ENCODE measurements at regions of chr20 and their contacts with region 1.

Region 1: DNA sequence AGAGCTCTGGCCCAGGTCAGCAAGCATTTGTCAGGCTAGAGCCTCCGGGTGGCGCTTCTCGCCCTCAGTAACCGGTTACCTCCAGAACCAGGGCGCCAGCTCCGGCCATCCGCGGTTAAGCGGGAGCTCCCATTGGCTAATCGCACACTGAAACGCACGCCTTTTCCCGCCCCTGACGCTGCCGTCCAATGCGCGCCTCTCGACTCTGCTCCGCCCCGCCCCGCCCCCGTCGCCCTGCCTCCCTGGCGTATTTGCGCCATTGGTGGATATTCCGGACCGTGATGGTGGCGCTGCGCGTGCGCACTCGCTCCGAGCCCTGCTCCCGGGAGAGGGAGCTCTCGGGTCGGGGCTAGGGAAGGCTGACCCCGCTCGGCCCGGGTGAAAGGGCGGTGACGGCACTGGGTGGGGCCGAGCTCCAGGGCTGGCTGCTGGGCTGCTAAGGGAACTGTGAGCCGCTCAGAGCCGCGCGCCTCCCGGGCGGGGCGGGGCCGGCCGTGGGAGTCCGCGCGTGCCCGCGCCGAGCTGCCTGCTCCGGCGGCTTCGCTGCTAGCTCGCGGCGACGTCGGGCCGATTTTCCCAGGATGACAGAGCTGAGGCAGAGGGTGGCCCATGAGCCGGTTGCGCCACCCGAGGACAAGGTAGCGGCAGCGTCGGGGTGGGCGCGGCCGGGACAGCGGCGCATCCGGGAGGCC is at the start of gene CDS2:
- DNase-seq: peak; percentile 99
- ATAC-seq: peak; percentile 90
- H3K4me3 ChIP-seq: peak within 1 kb of the TSS; percentile 87
- H3K27ac ChIP-seq: peak within 1 kb of the TSS; percentile 44
- H3K4me1 ChIP-seq: peaks cover 15% of the 10 kb centered on the region
- H3K27me3 ChIP-seq: no peaks in the 10 kb centered on the region
- CTCF ChIP-seq: peak; percentile 72
- total RNA-seq, gene CDS2: 13.2 and 17.1 TPM in 2 replicates

Region 2: DNA sequence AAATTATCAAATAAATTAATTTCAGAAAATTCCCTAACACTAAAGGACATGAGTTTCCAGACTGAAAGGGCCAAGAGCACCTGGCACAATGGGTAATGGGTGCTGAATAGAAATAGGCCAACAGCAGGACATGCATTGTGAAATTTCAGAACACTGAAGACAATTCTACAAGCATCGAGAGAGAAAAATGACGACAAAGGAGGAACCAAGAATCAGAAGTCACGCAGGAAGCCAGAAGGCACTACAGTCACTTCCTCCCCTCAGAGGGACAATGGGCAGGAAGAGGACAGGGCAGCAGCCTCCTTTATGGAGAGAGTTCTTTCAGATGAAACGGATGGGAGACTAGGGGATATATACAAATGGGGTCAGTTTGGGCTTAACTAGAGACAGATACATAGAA is 36.5 kb before region 1 on chr20:
- CTCF ChIA-PET with region 1: no interaction called
- POLR2A ChIA-PET with region 1: no interaction called
- intact Hi-C with region 1: no loop called
- DNase-seq: no peak
- ATAC-seq: no peak
- H3K4me3 ChIP-seq: no peak overlapping the region
- H3K27ac ChIP-seq: no peak overlapping the region
- H3K4me1 ChIP-seq: no peaks in the 10 kb centered on the region
- H3K27me3 ChIP-seq: no peaks in the 10 kb centered on the region
- CTCF ChIP-seq: no peak

Region 3: GRCh38 chr20:5104479-5104878 is 22.2 kb before region 1 on chr20:
- CTCF ChIA-PET with region 1: no interaction called
- POLR2A ChIA-PET with region 1: no interaction called
- intact Hi-C with region 1: no loop called
- DNase-seq: no peak
- ATAC-seq: no peak
- H3K4me3 ChIP-seq: no peak overlapping the region
- H3K27ac ChIP-seq: no peak overlapping the region
- H3K4me1 ChIP-seq: no peaks in the 10 kb centered on the region
- H3K27me3 ChIP-seq: no peaks in the 10 kb centered on the region
- CTCF ChIP-seq: no peak

Region 4: GRCh38 chr20:5153612-5154542 is 27.2 kb after region 1 on chr20:
- CTCF ChIA-PET with region 1: interaction called, 23 read pairs
- POLR2A ChIA-PET with region 1: interaction called, 13 read pairs
- intact Hi-C with region 1: no loop called
- DNase-seq: peak; percentile 96
- ATAC-seq: peak; percentile 90
- H3K4me3 ChIP-seq: peak overlapping the region; percentile 25; the same call in 1 of the 2 replicates
- H3K27ac ChIP-seq: peak overlapping the region; percentile 93
- H3K4me1 ChIP-seq: peaks cover 56% of the 10 kb centered on the region
- H3K27me3 ChIP-seq: no peaks in the 10 kb centered on the region
- CTCF ChIP-seq: no peak

Region 5: DNA sequence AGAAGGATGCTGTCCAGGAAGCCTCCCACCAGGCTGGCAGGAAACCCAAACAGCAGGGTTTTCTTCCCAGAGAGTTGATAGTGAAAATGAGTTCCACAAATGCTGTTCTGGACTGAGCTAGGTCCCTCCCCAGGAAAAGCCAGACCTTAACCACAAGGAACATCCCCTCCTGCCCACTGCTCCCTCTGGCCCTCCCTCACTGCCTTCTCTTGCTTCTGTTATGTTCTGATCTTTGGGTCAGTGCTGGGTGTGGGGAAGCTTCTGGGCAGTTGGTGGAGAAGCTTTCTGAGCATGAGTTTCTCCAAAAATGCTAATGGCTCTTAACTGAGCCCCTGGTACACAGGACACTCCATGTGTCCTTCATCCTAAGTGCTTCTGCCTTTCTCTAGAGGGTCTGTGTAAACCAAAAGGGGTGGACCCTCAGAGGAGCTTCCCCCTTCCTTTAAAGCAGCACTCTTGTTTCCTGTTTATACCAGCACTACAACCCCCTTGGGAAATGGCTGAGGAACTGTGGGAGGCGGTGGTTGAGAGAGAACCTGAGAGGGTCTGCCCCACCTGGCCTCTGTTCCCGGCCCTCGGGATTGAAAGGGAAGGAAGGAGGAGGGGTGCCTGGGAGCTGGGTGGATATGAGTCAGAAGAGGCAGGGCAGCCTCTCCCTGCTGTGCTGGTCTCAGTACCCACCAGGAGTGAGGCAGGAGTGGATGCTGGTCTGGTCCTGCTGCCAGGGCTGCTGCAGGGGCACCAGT is 42.2 kb after region 1 on chr20:
- CTCF ChIA-PET with region 1: interaction called, 17 read pairs
- POLR2A ChIA-PET with region 1: interaction called, 5 read pairs
- intact Hi-C with region 1: no loop called
- DNase-seq: peak; percentile 66
- ATAC-seq: peak; percentile 98
- H3K4me3 ChIP-seq: no peak overlapping the region
- H3K27ac ChIP-seq: 0 out of 2 replicates have a peak overlapping the region, but pooled peaks have one; percentile 19
- H3K4me1 ChIP-seq: peaks cover 14% of the 10 kb centered on the region
- H3K27me3 ChIP-seq: no peaks in the 10 kb centered on the region
- CTCF ChIP-seq: no peak

Region 6: GRCh38 chr20:5191829-5192569 is 65.3 kb after region 1 on chr20:
- CTCF ChIA-PET with region 1: interaction called, 161 read pairs
- POLR2A ChIA-PET with region 1: interaction called, 16 read pairs
- intact Hi-C with region 1: loop called (anchors 1 kb)
- DNase-seq: peak; percentile 82
- ATAC-seq: peak; percentile 87
- H3K4me3 ChIP-seq: no peak overlapping the region
- H3K27ac ChIP-seq: no peak overlapping the region
- H3K4me1 ChIP-seq: no peaks in the 10 kb centered on the region
- H3K27me3 ChIP-seq: no peaks in the 10 kb centered on the region
- CTCF ChIP-seq: peak; percentile 87

Region 7: DNA sequence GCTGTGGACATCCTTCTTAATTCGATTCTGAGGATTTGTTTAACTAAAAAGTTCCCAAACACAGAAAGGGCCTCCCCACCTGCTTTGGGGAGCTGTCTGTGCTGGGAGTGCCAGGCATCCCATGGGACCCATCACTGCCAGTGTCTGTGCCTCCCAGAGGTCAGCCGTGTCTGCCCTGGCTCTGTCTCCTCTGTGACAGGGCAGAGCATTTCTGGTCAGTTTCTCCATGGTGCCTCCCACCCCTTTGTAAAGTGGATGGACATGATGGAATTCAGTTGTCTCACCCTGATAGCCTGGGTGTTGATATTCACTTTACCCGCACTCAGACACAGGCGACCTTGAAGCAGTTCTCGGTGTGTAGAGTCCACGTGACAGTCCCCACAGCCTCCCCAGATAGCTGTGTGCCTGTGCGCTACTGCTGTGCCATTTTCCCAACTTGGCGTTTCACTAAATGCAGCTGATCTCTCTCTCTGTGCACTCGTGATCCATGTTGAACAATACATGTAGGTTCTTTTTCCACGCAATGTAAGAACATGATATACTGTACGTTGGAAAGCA is 70.7 kb after region 1 on chr20:
- CTCF ChIA-PET with region 1: interaction called, 161 read pairs
- POLR2A ChIA-PET with region 1: interaction called, 16 read pairs
- intact Hi-C with region 1: loop called (anchors 1 kb)
- DNase-seq: no peak
- ATAC-seq: no peak
- H3K4me3 ChIP-seq: no peak overlapping the region
- H3K27ac ChIP-seq: no peak overlapping the region
- H3K4me1 ChIP-seq: no peaks in the 10 kb centered on the region
- H3K27me3 ChIP-seq: no peaks in the 10 kb centered on the region
- CTCF ChIP-seq: no peak

Region 8: DNA sequence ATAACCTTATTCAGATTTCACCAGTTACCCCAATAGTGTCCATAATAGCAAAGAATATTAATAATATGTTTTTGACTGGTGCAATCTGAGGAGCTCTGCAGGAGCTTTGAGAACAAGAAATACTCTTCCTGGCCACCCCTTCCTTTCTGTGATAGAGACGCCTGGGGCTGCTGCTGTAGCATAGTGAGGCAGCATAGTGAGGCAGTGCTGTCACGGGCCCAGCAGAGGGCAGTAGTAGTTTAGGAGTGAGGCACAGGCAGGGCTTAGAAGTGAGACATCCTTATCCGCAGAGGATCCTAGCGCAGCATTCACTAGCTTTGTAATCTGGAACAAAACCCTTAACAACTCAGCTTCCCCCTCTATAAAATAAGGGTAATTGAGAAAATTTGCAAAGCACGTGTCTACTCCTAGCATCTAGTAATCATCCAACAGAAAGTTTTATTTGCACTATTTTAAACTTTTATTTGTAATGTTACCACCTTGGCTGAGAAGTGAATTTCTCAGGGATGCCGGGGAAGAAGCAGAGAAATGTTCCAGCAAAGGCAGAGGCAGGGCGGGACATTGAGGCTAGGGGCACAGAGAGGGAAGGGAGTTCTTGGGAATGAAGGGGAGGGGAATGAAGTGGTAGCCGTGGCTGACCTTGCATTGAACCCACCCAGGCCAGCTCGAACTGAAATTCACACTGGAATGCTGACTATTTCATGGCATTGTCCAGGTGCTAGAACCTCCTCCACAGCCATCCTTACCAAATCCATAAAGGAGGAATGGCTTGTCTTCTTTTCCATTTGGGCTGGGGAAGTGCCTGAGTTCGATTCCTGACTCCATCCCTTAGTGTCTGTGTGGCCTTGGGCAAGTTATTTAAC is 78.9 kb after region 1 on chr20:
- CTCF ChIA-PET with region 1: interaction called, 12 read pairs
- POLR2A ChIA-PET with region 1: no interaction called
- intact Hi-C with region 1: no loop called
- DNase-seq: peak; percentile 86
- ATAC-seq: peak; percentile 100
- H3K4me3 ChIP-seq: no peak overlapping the region
- H3K27ac ChIP-seq: no peak overlapping the region
- H3K4me1 ChIP-seq: no peaks in the 10 kb centered on the region
- H3K27me3 ChIP-seq: no peaks in the 10 kb centered on the region
- CTCF ChIP-seq: peak; percentile 97

Region 9: DNA sequence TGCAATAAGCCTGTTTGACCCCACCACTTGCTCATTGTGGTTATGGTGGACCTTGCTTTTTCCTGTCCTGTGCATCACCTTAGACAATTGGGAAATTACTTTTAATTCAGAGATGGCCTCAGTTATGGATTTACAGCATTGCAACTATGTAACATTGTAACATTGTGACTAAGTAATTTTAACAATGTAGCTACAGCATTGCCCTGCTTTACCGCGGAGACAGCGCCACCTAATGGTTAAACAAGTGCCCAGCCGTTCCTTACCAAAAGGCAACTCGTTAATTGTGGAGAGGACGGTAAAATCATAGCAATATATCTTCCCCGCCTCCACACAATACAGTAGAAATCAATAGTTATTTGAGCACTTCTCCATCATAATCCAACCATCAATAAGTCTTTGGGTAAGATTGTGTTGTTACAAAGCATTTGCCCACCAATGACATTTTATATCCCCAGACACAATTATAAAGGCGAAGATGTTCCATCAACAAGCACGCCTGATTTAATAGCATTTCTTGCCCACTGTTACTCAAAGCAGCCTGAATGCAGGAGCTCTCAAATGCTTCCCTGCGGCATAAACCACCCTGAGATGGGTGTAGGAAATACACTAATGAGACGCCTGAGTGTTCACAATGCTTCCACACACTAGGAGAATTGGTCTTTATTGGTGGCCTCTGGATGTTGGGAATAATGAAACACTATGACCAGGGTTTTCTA is 96.4 kb after region 1 on chr20:
- CTCF ChIA-PET with region 1: interaction called, 13 read pairs
- POLR2A ChIA-PET with region 1: no interaction called
- intact Hi-C with region 1: loop called (anchors 1 kb)
- DNase-seq: peak; percentile 83
- ATAC-seq: peak; percentile 92
- H3K4me3 ChIP-seq: no peak overlapping the region
- H3K27ac ChIP-seq: no peak overlapping the region
- H3K4me1 ChIP-seq: no peaks in the 10 kb centered on the region
- H3K27me3 ChIP-seq: no peaks in the 10 kb centered on the region; the same call in 1 of the 2 replicates
- CTCF ChIP-seq: peak; percentile 99

Measured in PC-3 (cell line).